ENCODE measurements at regions of chr19 and their contacts with region 1.

Region 1: GRCh38 chr19:48271531-48272151 is 1.8 kb downstream of the ZNF114 start:
- DNase-seq: peak; percentile 35
- ATAC-seq: peak; percentile 71
- H3K4me3 ChIP-seq: peak overlapping the region; percentile 41
- H3K27ac ChIP-seq: no peak overlapping the region; the same call in 1 of the 2 replicates
- H3K4me1 ChIP-seq: no peaks in the 10 kb centered on the region; the same call in 1 of the 2 replicates
- H3K27me3 ChIP-seq: no peaks in the 10 kb centered on the region
- CTCF ChIP-seq: no peak
- POLR2A ChIP-seq: no peak
- RAD21 ChIP-seq: no peak

Region 2: DNA sequence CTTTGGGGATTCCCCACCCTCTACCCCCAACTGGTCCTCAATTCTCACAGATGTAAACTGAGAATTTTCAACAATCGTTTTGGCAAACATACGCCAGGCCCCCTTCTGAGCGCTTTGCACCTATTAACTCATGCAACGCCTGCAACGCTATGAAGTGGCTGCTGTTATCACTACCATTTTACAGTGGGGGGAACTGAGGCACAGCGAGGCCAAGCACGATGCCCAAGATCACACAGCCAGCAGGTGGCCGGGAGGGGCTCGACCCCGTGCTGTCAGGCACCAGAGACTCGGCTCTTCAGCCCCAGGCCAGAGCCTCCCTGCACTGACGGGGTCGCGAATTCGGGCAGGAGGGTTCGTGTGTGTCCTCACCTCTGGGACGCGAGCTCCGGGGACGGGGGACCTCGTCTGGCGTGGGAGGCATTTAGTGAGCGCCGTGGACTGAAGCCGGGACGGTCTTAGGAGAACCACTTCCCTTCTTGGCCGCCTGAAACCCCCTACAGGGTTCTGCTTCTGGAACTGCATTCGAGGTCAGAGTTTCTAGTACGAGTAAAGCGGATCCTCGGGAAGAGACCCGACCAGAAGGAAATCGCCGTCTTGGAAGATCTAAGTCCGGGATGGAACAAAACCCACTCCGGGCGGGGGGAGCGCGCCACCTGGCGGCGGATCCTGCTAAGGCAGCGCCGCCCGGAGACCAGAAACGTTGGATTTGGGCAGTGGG is 19.3 kb after region 1 on chr19:
- CTCF ChIA-PET with region 1: interaction called, 7 read pairs
- POLR2A ChIA-PET with region 1: interaction called, 32 read pairs
- dilution Hi-C with region 1: no loop called
- in situ Hi-C with region 1: no loop called
- intact Hi-C with region 1: loop called (anchors 1 kb)
- DNase-seq: peak; percentile 81
- ATAC-seq: peak; percentile 89
- H3K4me3 ChIP-seq: peak overlapping the region; percentile 40
- H3K27ac ChIP-seq: peak overlapping the region; percentile 2
- H3K4me1 ChIP-seq: peaks cover 5% of the 10 kb centered on the region
- H3K27me3 ChIP-seq: no peaks in the 10 kb centered on the region
- CTCF ChIP-seq: peak; percentile 97
- POLR2A ChIP-seq: 0 out of 2 replicates have a peak, but pooled peaks have one; percentile 35
- RAD21 ChIP-seq: peak; percentile 92

Region 3: DNA sequence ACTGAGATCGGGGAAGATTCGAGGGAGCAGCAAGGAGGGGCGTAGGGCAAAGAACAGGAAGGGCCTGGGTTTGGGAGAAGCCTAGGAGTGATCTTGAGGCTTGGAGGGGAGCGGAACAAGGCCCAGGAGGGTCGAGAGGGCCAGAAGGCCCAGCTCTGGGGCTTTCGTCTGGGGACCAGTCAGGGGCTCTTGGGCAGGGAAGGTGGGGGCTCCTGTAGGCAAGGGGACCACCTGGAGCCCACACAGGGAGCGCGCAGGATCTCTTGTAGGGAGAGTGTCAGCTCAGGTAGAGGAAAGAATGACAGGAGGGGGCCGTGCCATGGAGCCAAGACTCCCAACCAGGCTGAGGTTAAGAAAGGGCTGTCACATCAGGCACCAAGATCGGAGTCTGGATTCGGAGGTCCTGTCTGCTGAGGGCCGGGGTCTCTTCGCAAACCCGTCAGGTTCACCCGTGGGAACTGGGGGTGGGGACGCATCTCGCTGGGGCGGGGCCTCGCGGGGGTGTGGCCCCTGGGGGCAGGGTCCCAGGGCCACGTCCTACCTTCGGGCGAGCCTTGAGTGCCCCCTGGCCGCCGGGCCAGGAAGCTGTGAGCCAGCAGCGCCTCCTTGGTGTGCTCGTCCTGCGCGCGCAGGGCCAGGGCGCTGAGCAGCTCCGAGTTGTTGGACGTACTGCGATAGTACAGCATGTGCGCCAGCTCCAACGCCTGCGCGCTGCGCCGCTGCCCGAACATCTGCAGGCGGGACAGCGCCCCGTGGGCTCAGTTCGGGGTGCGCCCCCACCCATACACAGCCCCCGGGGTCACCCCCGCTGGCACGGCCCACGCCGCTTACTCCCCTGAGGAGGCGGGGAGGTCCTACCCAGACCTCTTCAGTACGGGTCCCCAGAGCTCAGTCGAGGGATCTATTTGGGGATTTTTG is 62.1 kb after region 1 on chr19:
- CTCF ChIA-PET with region 1: no interaction called
- POLR2A ChIA-PET with region 1: no interaction called
- dilution Hi-C with region 1: no loop called
- in situ Hi-C with region 1: no loop called
- intact Hi-C with region 1: loop called (anchors 1 kb)
- DNase-seq: peak; percentile 91
- ATAC-seq: peak; percentile 93
- H3K4me3 ChIP-seq: peak overlapping the region; percentile 39
- H3K27ac ChIP-seq: no peak overlapping the region; the same call in 1 of the 2 replicates
- H3K4me1 ChIP-seq: peaks cover 15% of the 10 kb centered on the region
- H3K27me3 ChIP-seq: no peaks in the 10 kb centered on the region
- CTCF ChIP-seq: peak; percentile 96
- POLR2A ChIP-seq: 0 out of 2 replicates have a peak, but pooled peaks have one; percentile 18
- RAD21 ChIP-seq: peak; percentile 89

Region 4: GRCh38 chr19:48480558-48481500 is 209.2 kb after region 1 on chr19:
- CTCF ChIA-PET with region 1: no interaction called
- POLR2A ChIA-PET with region 1: no interaction called
- dilution Hi-C with region 1: no loop called
- in situ Hi-C with region 1: no loop called
- intact Hi-C with region 1: no loop called
- DNase-seq: peak; percentile 30
- ATAC-seq: peak; percentile 35
- H3K4me3 ChIP-seq: peak overlapping the region; percentile 16; the same call in 1 of the 2 replicates
- H3K27ac ChIP-seq: no peak overlapping the region; the same call in 1 of the 2 replicates
- H3K4me1 ChIP-seq: peaks cover 15% of the 10 kb centered on the region
- H3K27me3 ChIP-seq: no peaks in the 10 kb centered on the region
- CTCF ChIP-seq: no peak
- POLR2A ChIP-seq: no peak; the same call in 1 of the 2 replicates
- RAD21 ChIP-seq: no peak